ENCODE measurements at regions of chr10 and their contacts with region 1.

Region 1: DNA sequence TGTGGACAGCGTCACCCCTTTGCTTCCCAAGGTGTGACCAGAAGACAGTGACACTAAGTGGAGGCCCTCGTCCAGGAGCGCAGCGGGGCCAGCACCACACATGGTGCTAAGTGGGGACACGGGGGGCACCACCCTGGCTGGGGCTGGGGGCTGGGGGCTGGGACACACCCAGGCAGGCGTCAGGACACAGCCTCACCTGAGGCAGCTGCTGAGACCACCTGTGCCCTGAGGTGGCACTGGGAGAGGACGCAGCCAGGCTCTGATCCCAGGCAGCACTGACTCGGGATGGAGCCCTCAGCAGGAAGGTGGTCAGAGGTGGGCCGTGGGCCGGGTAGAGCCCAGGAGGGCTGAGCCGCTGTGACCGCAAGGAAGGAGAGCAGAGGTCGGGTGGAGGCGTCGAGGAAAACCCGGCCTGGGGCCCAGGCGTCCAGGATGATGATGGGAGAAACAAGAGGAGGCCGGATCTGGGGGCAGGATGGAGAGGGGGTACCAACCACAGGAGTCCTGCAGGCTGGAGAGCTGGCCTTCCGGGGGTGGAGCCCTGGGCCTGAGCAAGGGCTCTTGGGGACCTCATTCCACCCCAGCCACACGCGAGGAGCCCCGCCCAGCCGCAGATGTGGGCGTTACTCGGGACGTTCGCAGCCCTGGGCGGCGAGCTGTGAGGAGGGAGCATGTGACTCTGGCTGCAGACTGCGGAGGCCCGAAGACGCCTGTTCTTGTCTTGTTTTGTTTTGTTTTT is 22.5 kb downstream of the LRRC27 start:
- DNase-seq: no peak
- H3K4me3 ChIP-seq: no peak overlapping the region
- H3K27ac ChIP-seq: no peak overlapping the region
- H3K4me1 ChIP-seq: 0 out of 7 replicates have a peak, but pooled peaks cover 0 to 3% (median 0%) of the 10 kb centered on the region in 4 experiments
- H3K27me3 ChIP-seq: peaks cover 0 to 2% (median 1%) of the 10 kb centered on the region in 4 experiments; a peak in 1 of 7 replicates
- CTCF ChIP-seq: no peak
- EP300 ChIP-seq: no peak
- POLR2A ChIP-seq: no peak
- RAD21 ChIP-seq: no peak

Region 2: GRCh38 chr10:132223156-132223590 is 131.4 kb before region 1 on chr10:
- CTCF ChIA-PET with region 1: interaction called, 21 read pairs
- POLR2A ChIA-PET with region 1: interaction called, 3 read pairs
- DNase-seq: peak; percentile 63 to 86
- H3K4me3 ChIP-seq: no peak overlapping the region
- H3K27ac ChIP-seq: no peak overlapping the region
- H3K4me1 ChIP-seq: no peaks in the 10 kb centered on the region; a peak in 1 of 7 replicates
- H3K27me3 ChIP-seq: no peaks in the 10 kb centered on the region
- CTCF ChIP-seq: peak in 2 of 3 experiments; percentile 98 to 100; a peak in 3 of 4 replicates
- EP300 ChIP-seq: no peak
- POLR2A ChIP-seq: no peak
- RAD21 ChIP-seq: peak; percentile 97

Region 3: GRCh38 chr10:132336919-132337407 is 17.6 kb before region 1 on chr10:
- CTCF ChIA-PET with region 1: interaction called, 17 read pairs
- POLR2A ChIA-PET with region 1: no interaction called
- DNase-seq: no peak
- H3K4me3 ChIP-seq: no peak overlapping the region
- H3K27ac ChIP-seq: no peak overlapping the region
- H3K4me1 ChIP-seq: peaks cover 0 to 9% (median 3%) of the 10 kb centered on the region in 4 experiments; a peak in 4 of 7 replicates
- H3K27me3 ChIP-seq: 0 out of 7 replicates have a peak, but pooled peaks cover 0 to 3% (median 0%) of the 10 kb centered on the region in 4 experiments
- CTCF ChIP-seq: no peak
- EP300 ChIP-seq: no peak
- POLR2A ChIP-seq: no peak
- RAD21 ChIP-seq: no peak